Activated CD4-positive, alpha-beta memory T cell treated with anti-CD3 and anti-CD28 coated beads, Interleukin-2, amount 10 ng/mL, durations not matched to agents 7 days and 5 days (primary cell): ENCODE measurements at regions of chr4 and their contacts with region 1.

Region 1: DNA sequence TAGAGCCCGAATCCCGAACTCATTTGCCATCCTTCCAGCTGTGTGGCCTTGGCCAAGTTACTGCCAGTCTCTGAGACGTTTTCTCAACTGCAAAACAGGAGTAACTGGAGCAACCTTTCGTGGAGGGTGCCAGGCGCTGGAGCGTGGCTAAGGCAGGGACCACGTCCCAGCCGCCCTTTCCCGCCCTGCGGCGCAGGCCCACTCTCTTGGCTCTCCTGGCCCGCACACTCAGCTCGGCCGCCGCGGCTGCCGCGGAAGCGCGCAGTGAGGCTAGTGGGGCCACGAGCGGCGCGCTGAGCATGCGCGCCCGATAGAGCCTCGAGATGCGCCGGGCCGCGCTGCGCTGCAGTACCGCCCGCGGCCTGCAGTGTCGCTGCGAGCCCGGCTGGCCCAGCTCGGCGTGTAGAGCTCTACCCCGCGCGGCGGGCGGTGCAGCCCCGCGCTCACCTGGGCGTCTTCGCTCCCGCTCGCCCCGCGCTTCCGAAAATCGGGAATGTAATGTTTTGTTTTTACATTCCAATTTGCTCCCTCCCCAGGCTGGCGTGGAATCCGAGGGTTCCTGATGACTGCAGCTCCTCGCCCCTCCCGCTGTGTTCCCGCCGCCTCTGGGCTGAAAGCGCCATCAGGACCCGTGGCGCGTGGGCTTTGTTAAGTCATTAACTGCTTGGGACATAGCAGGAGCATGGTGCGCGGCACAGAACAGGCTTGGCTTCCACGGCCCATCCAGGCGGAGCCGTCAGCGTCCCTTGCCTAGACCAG is 4.0 kb upstream of the ZNF518B start:
- DNase-seq: peak; percentile 79
- H3K4me3 Mint-ChIP-seq: peak overlapping the region; percentile 54
- H3K27ac Mint-ChIP-seq: no peak overlapping the region
- H3K4me1 Mint-ChIP-seq: peaks cover 26% of the 10 kb centered on the region
- H3K27me3 Mint-ChIP-seq: peaks cover 32% of the 10 kb centered on the region

Region 2: GRCh38 chr4:10116580-10117358 is 344.5 kb before region 1 on chr4 and contains the start of gene WDR1:
- CTCF ChIA-PET with region 1: interaction called, 9 read pairs
- POLR2A ChIA-PET with region 1: interaction called, 11 read pairs
- DNase-seq: peak; percentile 95
- H3K4me3 Mint-ChIP-seq: peak within 1 kb of the TSS; percentile 94
- H3K27ac Mint-ChIP-seq: peak within 1 kb of the TSS; percentile 97
- H3K4me1 Mint-ChIP-seq: peaks cover 57% of the 10 kb centered on the region
- H3K27me3 Mint-ChIP-seq: no peaks in the 10 kb centered on the region
- total RNA-seq, gene WDR1: 463 to 465 TPM

Region 3: GRCh38 chr4:10164877-10165283 is 296.4 kb before region 1 on chr4:
- CTCF ChIA-PET with region 1: interaction called, 12 read pairs
- POLR2A ChIA-PET with region 1: interaction called, 3 read pairs
- DNase-seq: peak; percentile 28
- H3K4me3 Mint-ChIP-seq: no peak overlapping the region
- H3K27ac Mint-ChIP-seq: no peak overlapping the region
- H3K4me1 Mint-ChIP-seq: peaks cover 30% of the 10 kb centered on the region
- H3K27me3 Mint-ChIP-seq: no peaks in the 10 kb centered on the region

Region 4: DNA sequence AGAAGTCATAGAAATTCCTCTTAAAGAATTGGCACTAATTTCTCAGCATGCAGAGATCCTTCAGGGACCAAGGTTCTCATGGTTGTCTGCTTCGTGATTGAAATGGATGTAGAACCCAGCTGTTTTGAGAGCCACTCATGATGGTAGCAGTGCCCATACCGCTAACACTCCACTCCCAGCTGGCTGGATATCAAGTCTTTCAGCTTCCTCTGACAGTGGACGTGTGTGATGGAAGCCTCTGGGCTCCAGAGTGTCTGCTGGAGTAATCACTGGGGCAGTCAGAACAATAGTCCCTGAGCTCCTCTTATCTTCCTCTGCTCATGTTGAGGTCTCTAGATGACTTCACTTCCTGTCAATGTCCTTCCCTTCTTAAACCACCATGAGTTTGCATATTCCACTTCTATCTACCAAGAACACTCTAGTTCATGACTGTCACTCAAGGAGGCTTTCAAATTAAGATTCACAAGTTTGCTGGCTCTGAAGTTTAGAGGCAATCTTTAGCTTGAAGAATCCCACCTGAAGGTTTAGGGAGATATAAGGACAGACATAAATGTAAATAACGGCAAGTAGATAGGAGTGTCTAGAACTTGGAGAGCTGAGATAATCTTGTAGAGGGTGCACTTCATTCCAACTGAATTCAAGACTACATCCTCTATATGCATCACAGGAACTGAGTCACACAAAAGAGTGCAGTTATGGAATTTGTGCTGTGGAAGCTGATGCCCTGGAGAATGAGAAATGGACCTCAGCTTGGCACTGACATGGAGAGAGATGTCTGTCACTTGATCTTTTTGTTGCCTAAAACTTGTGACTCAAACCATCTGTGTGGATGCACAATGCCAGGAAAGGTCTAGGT is 280.1 kb before region 1 on chr4:
- CTCF ChIA-PET with region 1: interaction called, 4 read pairs
- POLR2A ChIA-PET with region 1: interaction called, 14 read pairs
- DNase-seq: peak; percentile 58
- H3K4me3 Mint-ChIP-seq: no peak overlapping the region
- H3K27ac Mint-ChIP-seq: peak overlapping the region; percentile 90
- H3K4me1 Mint-ChIP-seq: peaks cover 49% of the 10 kb centered on the region
- H3K27me3 Mint-ChIP-seq: no peaks in the 10 kb centered on the region

Region 5: GRCh38 chr4:10535912-10536311 is 74.6 kb after region 1 on chr4:
- CTCF ChIA-PET with region 1: interaction called, 24 read pairs
- POLR2A ChIA-PET with region 1: interaction called, 3 read pairs
- DNase-seq: no peak
- H3K4me3 Mint-ChIP-seq: no peak overlapping the region
- H3K27ac Mint-ChIP-seq: no peak overlapping the region
- H3K4me1 Mint-ChIP-seq: no peaks in the 10 kb centered on the region
- H3K27me3 Mint-ChIP-seq: peaks cover 3% of the 10 kb centered on the region

Region 6: DNA sequence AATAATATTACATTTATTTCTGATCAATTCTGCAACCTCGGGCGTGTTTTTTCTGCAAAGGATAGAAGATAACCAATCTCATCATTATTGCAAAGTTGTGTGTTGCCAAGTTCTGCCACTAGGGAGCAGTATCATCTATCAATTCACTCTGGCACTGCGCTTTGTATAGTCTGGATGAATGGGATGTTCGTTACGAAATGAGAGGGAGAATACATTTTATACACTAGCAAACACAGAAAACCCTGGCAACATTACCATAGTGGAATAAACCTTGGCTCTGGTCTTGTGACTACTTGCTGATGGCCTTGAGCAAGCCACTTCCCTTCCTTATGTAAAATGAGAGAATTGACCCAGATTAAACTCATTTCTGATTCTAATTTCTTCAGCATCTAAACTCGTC is 93.4 kb after region 1 on chr4:
- CTCF ChIA-PET with region 1: interaction called, 11 read pairs
- POLR2A ChIA-PET with region 1: no interaction called
- DNase-seq: peak; percentile 35
- H3K4me3 Mint-ChIP-seq: no peak overlapping the region
- H3K27ac Mint-ChIP-seq: no peak overlapping the region
- H3K4me1 Mint-ChIP-seq: no peaks in the 10 kb centered on the region
- H3K27me3 Mint-ChIP-seq: peaks cover 5% of the 10 kb centered on the region